ENCODE measurements at regions of chr6 and their contacts with region 1.

Region 1: DNA sequence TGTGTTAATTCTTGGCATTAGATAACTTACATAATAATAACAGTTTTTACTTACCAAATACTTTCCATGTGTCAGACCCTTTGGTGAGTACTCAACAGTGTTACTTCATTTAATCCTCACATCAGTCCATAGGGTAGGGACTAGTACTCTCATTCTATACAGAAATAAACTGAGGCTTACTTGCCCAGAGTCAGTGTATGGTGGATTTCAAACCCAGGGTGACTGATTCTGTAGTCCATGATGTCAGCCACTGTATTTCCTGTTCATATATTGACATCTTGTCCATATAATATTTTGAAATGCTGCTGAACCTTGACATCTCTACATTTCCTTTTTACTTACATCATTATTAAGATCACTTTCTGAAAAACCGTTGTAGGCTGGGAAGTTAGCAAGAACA is 2.5 kb upstream of the PNLDC1 start:
- DNase-seq: no peak
- H3K4me3 ChIP-seq: no peak overlapping the region
- H3K27ac ChIP-seq: no peak overlapping the region
- H3K4me1 ChIP-seq: peaks cover 0 to 22% (median 11%) of the 10 kb centered on the region in 4 donors
- H3K27me3 ChIP-seq: no peaks in the 10 kb centered on the region
- CTCF ChIP-seq: no peak

Region 2: GRCh38 chr6:159679091-159680077 is 118.2 kb before region 1 on chr6:
- intact Hi-C with region 1: no loop called
- DNase-seq: no peak
- H3K4me3 ChIP-seq: no peak overlapping the region
- H3K27ac ChIP-seq: peak overlapping the region in 1 of 2 donors; percentile 12
- H3K4me1 ChIP-seq: no peaks in the 10 kb centered on the region
- H3K27me3 ChIP-seq: no peaks in the 10 kb centered on the region
- CTCF ChIP-seq: no peak

Region 3: DNA sequence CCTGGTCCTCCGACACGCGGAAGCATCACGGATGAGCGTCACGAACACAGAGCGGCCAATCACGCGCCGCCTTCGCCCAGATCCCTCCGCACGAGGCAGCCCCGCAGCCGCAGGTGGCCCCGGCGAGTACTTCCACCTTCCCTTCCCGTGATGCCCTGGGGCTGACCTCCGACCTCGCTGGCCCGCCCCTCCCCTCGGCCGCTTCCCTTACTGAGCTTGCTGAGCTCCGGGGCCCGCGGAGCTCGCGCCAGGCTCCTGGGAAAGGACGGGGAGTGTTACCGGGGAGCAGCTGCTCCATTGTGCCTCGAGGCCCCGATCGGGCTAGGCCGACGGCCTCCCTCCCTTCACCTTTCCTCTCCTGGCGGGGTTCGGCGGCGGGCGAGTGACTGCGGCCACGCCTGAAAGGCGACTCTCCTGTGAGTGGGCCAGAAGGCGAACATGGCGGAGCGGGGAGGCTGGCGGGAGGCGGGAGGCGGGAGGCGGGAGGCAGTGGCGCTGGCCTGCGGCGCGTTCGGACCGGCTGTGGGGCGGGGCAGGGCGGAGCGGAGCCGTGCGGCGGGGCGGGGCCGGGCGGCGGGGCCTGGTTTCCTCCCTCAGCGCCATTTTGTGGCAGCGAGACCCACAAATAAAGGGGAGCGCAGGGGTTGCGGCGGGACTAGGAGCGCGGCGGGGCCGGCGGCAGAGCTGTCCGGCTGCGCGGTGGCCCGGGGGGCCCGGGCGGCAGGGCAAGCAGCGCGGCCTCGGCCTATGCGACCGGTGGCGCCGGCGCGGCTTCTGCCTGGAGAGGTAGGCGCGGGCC is 70.4 kb before region 1 on chr6 and contains the start of gene WTAP:
- intact Hi-C with region 1: no loop called
- DNase-seq: peak; percentile 93 to 98
- H3K4me3 ChIP-seq: peak within 1 kb of the TSS; percentile 84 to 96
- H3K27ac ChIP-seq: peak within 1 kb of the TSS; percentile 99
- H3K4me1 ChIP-seq: peaks cover 0 to 42% (median 22%) of the 10 kb centered on the region in 4 donors
- H3K27me3 ChIP-seq: no peaks in the 10 kb centered on the region
- CTCF ChIP-seq: no peak

Region 4: GRCh38 chr6:159844737-159845645 is 47.4 kb after region 1 on chr6:
- intact Hi-C with region 1: loop called (anchors 5 kb)
- DNase-seq: peak in 1 of 2 donors; percentile 56
- H3K4me3 ChIP-seq: no peak overlapping the region
- H3K27ac ChIP-seq: no peak overlapping the region
- H3K4me1 ChIP-seq: no peaks in the 10 kb centered on the region
- H3K27me3 ChIP-seq: no peaks in the 10 kb centered on the region
- CTCF ChIP-seq: no peak

Measured in tibial artery (tissue), 4 donors.